ENCODE measurements at regions of chr6 and their contacts with region 1.

Region 1: GRCh38 chr6:84161190-84161589 is 66.3 kb downstream of the CEP162 start:
- DNase-seq: peak; percentile 34
- H3K4me3 ChIP-seq: no peak overlapping the region
- H3K27ac ChIP-seq: no peak overlapping the region
- H3K4me1 ChIP-seq: no peaks in the 10 kb centered on the region
- H3K27me3 ChIP-seq: no peaks in the 10 kb centered on the region
- CTCF ChIP-seq: no peak
- POLR2A ChIP-seq: no peak

Region 2: GRCh38 chr6:84150705-84151104 is 10.5 kb before region 1 on chr6:
- CTCF ChIA-PET with region 1: interaction called, 11 read pairs
- POLR2A ChIA-PET with region 1: no interaction called
- dilution Hi-C with region 1: no loop called
- intact Hi-C with region 1: no loop called
- DNase-seq: no peak
- H3K4me3 ChIP-seq: no peak overlapping the region
- H3K27ac ChIP-seq: no peak overlapping the region
- H3K4me1 ChIP-seq: no peaks in the 10 kb centered on the region
- H3K27me3 ChIP-seq: no peaks in the 10 kb centered on the region
- CTCF ChIP-seq: no peak
- POLR2A ChIP-seq: no peak